ENCODE measurements at regions of chr5 and their contacts with region 1.

Region 1: DNA sequence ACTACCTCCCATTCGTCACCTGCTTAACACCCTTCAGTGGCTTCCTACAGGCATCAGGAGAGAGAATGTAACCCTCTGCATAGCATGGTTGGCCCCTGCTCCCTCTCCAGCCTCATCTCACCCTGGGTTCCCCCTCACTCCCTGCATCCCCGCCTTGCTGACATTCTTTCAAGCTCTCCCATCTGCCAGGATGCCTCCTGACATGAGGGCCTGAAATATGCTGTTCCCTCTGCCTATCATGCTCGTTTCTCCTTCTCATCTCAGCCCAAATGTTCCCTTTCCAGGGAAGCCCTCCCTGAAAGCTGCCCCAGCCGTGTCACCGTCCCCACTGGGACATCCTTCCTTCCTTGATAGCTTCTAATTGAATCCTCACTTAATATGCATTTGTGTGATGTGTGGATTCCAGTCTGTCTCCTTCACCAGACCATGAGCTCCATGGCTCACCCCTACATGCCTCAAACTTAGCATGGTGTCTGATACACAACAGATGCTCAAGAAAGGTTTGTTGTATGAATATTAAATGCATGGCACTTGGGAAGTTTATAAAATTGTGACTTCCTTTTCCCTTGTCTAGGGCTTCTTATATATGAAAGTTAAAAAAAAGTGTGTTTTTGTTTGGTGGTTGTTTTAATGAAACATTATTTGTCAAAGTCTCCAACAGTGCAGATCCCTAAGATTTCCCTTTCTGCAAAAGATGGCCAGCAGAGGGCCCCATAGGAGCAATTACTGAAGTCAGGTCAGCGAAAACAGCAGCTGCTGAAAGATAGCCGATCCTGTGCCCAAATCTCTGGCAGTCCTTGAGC is 7.3 kb upstream of the C5orf58 start:
- ATAC-seq: peak; percentile 61 to 84 (median 68)
- H3K4me3 ChIP-seq: no peak overlapping the region
- H3K27ac ChIP-seq: no peak overlapping the region
- H3K4me1 ChIP-seq: peaks cover 45 to 67% of the 10 kb centered on the region in 2 donors

Region 2: GRCh38 chr5:169296419-169297143 is 928.9 kb before region 1 on chr5:
- in situ Hi-C with region 1: no loop called
- ATAC-seq: peak in 1 of 8 experiments; percentile 33
- H3K4me3 ChIP-seq: no peak overlapping the region
- H3K27ac ChIP-seq: no peak overlapping the region
- H3K4me1 ChIP-seq: peaks cover 4 to 6% of the 10 kb centered on the region in 2 donors

Region 3: GRCh38 chr5:170411100-170411499 is 185.6 kb after region 1 on chr5:
- in situ Hi-C with region 1: loop called in 4 of 9 experiments (anchors 10 to 25 kb)
- ATAC-seq: no peak
- H3K4me3 ChIP-seq: no peak overlapping the region
- H3K27ac ChIP-seq: no peak overlapping the region
- H3K4me1 ChIP-seq: peaks cover 12 to 20% of the 10 kb centered on the region in 2 donors

Region 4: DNA sequence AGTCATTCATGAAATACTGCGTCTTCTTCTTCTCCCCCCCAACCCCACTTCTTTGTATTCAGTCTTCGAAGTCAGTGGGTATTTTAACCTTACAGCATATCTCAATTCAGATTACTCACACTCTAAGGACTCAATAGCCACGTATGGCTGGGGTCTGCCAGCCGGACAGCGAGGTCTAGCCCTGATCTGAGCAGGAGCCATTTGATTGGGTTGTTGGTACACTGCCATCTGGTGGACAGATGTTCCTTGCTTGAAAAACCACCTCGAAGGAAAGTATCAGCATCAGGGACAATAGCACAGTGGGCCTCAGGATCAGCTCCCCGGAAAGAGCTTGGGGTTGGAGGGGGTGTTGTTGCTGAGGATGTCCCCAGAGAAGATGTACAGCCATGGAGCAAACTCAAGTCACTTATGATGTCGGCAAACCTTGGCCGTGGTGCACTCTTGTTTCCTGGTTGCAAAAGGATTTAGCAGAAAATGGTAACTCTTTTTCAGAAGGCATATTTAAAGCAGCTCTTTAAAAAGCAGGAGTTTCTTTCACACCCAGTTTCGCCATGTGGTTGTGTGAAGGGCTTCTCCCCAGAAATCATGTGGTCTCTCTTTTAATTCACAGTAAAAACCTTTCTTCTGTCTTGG is 195.4 kb after region 1 on chr5:
- in situ Hi-C with region 1: loop called in 7 of 9 experiments (anchors 10 to 25 kb)
- ATAC-seq: peak; percentile 57 to 78 (median 72)
- H3K4me3 ChIP-seq: no peak overlapping the region
- H3K27ac ChIP-seq: peak overlapping the region in 1 of 2 donors; percentile 65
- H3K4me1 ChIP-seq: peaks cover 39 to 44% of the 10 kb centered on the region in 2 donors

Region 5: DNA sequence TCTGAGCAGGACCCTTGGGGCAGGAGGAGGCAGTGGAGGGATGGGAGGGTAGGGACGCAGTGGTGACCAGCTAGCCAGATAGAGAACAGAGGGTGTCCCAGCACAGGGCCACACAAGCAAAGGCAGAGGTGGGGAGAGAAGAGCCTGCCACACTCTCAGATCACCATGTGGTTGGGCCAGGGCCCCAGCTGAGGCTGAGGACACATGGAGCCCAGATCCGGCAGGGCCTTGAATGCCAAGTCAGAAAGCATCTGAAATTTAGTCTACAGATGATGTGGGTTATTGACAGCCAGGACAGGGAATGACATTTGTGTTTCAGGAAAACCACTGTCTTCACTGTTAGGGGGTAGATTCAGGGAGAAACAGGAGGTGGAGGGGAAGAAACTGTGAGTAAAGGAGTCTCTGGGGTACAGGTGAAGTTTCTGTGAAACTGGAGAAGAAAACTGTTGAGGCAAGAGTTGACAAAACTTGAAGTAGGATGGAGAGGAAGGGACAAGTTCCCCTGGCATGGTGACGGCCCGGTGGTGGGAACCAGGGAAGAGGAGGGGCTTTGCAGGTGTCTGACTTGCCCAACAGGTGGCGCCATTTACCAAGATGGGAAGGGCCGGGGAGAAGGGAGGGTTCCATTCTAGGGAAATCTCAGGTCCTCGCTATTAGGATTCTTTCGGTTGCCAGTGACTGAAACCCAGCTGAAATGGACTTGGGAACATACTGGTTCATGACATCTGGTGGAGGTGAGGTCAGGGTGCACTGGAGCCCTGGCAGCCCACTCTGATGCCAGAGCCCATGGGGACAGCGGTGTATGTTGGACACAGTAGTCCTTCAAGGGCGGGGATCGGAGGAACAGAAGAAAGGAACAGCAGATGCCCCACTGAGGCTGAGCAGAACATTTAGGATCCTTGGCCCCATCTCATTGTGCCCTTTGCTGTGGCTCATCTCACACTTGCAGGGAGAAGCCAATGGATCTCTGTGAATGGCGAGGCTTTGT is 378.3 kb after region 1 on chr5:
- in situ Hi-C with region 1: loop called in 2 of 9 experiments (anchors 25 kb)
- ATAC-seq: peak; percentile 67 to 99 (median 81)
- H3K4me3 ChIP-seq: no peak overlapping the region
- H3K27ac ChIP-seq: no peak overlapping the region
- H3K4me1 ChIP-seq: peaks cover 34 to 49% of the 10 kb centered on the region in 2 donors

Region 6: DNA sequence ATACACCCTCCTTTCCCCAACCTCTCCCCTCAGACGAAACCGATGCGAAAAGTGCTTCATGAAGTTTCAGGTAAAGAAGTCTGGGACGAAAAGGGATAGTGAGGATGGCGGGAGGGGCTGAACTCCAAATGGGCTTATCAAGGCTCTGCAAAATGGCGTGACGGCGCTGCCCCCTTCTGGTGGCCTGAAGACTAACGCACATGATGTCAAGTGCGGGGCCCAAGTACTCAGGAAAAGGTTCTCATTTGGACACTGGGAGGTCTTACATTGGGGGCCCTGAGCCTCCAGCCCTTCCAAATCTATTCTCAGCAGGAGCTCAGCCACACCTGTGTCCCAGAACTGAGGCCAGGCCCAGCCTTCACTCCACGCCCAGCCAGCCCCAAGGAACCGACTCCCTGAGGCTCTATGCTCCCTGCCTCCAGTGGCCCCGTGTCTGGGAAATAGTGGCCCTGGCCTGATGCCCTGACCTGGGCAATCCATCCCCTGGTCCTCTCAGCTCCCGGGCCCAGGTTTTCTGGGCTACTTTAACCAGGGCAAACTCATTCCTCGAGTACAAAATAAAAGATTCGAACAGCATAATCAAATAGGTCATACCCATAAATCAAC is 398.2 kb after region 1 on chr5:
- in situ Hi-C with region 1: loop called in 3 of 9 experiments (anchors 10 to 25 kb)
- ATAC-seq: peak in 5 of 8 experiments; percentile 25 to 90 (median 78)
- H3K4me3 ChIP-seq: no peak overlapping the region
- H3K27ac ChIP-seq: no peak overlapping the region
- H3K4me1 ChIP-seq: peaks cover 38 to 40% of the 10 kb centered on the region in 2 donors

Region 7: GRCh38 chr5:170701334-170701733 is 475.8 kb after region 1 on chr5:
- in situ Hi-C with region 1: no loop called
- ATAC-seq: peak in 7 of 8 experiments; percentile 32 to 81 (median 53)
- H3K4me3 ChIP-seq: no peak overlapping the region
- H3K27ac ChIP-seq: no peak overlapping the region
- H3K4me1 ChIP-seq: peaks cover 4 to 41% of the 10 kb centered on the region in 2 donors

Measured in motor neuron (in vitro differentiated cells).